Natural killer cell (primary cell): ENCODE measurements at regions of chr12 and their contacts with region 1.

Region 1: DNA sequence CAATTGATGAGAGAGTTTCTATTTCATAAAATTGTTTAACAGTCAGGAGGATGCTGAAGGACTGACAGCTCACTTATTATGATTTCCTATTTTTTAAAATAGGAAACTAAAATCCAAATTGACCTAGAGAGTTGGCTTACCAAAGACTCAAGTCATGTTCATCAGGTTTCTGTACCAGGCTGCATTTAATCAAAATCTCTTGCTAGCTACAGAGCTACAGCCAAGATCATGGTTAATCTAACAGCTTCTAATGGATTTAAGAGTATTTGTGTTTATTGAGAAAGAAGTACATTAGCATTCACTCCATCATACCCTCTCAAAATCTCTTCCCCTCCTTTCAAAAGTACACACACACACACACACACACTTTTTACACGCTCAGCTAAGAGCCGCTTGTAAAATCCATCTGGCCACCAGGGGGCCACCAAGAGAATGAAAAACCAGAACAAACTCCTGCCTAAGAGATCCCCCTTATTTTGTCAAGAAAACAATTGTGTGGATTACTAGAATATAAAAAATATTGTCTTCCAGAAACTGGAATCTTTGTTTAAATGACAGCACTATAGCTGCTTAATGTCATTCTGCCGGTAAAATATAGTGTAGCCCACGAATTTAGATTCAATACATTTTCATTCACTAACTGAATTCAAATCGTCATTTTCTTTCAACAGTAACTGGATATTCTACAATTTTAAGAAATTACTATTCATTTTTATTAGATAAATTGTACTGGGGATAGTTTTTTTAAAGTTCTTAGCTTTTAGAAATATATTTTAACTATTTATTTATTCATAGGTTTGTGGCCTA is 334.0 kb downstream of the BTG1 start:
- DNase-seq: peak; percentile 67 to 87
- ATAC-seq: peak; percentile 81 to 88 (median 87)
- H3K4me3 ChIP-seq: no peak overlapping the region
- H3K4me3 Mint-ChIP-seq: no peak overlapping the region
- H3K27ac ChIP-seq: no peak overlapping the region
- H3K27ac Mint-ChIP-seq: peak overlapping the region; percentile 76 to 78
- H3K4me1 ChIP-seq: no peaks in the 10 kb centered on the region
- H3K4me1 Mint-ChIP-seq: peaks cover 6 to 10% of the 10 kb centered on the region in 2 donors
- H3K27me3 ChIP-seq: no peaks in the 10 kb centered on the region
- H3K27me3 Mint-ChIP-seq: no peaks in the 10 kb centered on the region
- CTCF ChIP-seq: peak; percentile 95

Region 2: GRCh38 chr12:92034858-92035401 is 223.2 kb after region 1 on chr12:
- intact Hi-C with region 1: loop called (anchors 5 kb)
- DNase-seq: peak; percentile 26 to 79
- ATAC-seq: peak; percentile 56 to 69 (median 58)
- H3K4me3 ChIP-seq: peak overlapping the region; percentile 17
- H3K4me3 Mint-ChIP-seq: peak overlapping the region; percentile 96
- H3K27ac ChIP-seq: peak overlapping the region; percentile 71
- H3K27ac Mint-ChIP-seq: peak overlapping the region; percentile 97 to 98
- H3K4me1 ChIP-seq: peaks cover 36% of the 10 kb centered on the region
- H3K4me1 Mint-ChIP-seq: peaks cover 57 to 72% of the 10 kb centered on the region in 2 donors
- H3K27me3 ChIP-seq: no peaks in the 10 kb centered on the region
- H3K27me3 Mint-ChIP-seq: no peaks in the 10 kb centered on the region
- CTCF ChIP-seq: no peak